ENCODE measurements at regions of chr7 and their contacts with region 1.

Region 1: GRCh38 chr7:87152107-87152844 is at the start of gene DMTF1:
- DNase-seq: peak; percentile 89 to 95 (median 91)
- H3K4me3 ChIP-seq: peak within 1 kb of the TSS; percentile 87 to 96 (median 93)
- H3K4me3 Mint-ChIP-seq: peak within 1 kb of the TSS; percentile 96 to 97
- H3K27ac ChIP-seq: peak within 1 kb of the TSS; percentile 98 to 99
- H3K27ac Mint-ChIP-seq: peak within 1 kb of the TSS; percentile 97 to 100 (median 99)
- H3K4me1 ChIP-seq: peaks cover 17 to 27% of the 10 kb centered on the region in 2 donors
- H3K4me1 Mint-ChIP-seq: peaks cover 33% of the 10 kb centered on the region
- H3K27me3 ChIP-seq: no peaks in the 10 kb centered on the region
- H3K27me3 Mint-ChIP-seq: peaks cover 0 to 4% (median 0%) of the 10 kb centered on the region in 3 donors
- CTCF ChIP-seq: no peak
- polyA plus RNA-seq, gene DMTF1: 4.9 to 108 (median 8.3) TPM

Region 2: GRCh38 chr7:87219545-87220025 is 67.3 kb after region 1 on chr7 and contains the start of gene TMEM243:
- intact Hi-C with region 1: loop called (anchors 10 kb)
- DNase-seq: peak; percentile 85 to 88 (median 87)
- H3K4me3 ChIP-seq: peak within 1 kb of the TSS; percentile 71 to 99 (median 98)
- H3K4me3 Mint-ChIP-seq: peak within 1 kb of the TSS; percentile 98 to 99
- H3K27ac ChIP-seq: peak within 1 kb of the TSS; percentile 90 to 98
- H3K27ac Mint-ChIP-seq: peak within 1 kb of the TSS; percentile 94 to 97 (median 96)
- H3K4me1 ChIP-seq: peaks cover 34 to 41% of the 10 kb centered on the region in 2 donors
- H3K4me1 Mint-ChIP-seq: peaks cover 33% of the 10 kb centered on the region
- H3K27me3 ChIP-seq: peaks cover 20 to 29% of the 10 kb centered on the region in 2 donors
- H3K27me3 Mint-ChIP-seq: peaks cover 0 to 12% (median 10%) of the 10 kb centered on the region in 3 donors
- CTCF ChIP-seq: peak; percentile 25
- polyA plus RNA-seq, gene TMEM243: 24.9 to 43.8 (median 30.8) TPM

Region 3: GRCh38 chr7:87876040-87876868 is 724.0 kb after region 1 on chr7 and contains the starts of genes DBF4 and SLC25A40:
- intact Hi-C with region 1: loop called in 1 of 2 experiments (anchors 10 kb)
- DNase-seq: peak; percentile 85 to 88 (median 86)
- H3K4me3 ChIP-seq: peak within 1 kb of the TSS; percentile 93 to 99 (median 98)
- H3K4me3 Mint-ChIP-seq: peak within 1 kb of the TSS; percentile 96 to 97
- H3K27ac ChIP-seq: peak within 1 kb of the TSS; percentile 91 to 94
- H3K27ac Mint-ChIP-seq: peak within 1 kb of the TSS; percentile 93 to 98 (median 96)
- H3K4me1 ChIP-seq: peaks cover 28 to 47% of the 10 kb centered on the region in 2 donors
- H3K4me1 Mint-ChIP-seq: peaks cover 46% of the 10 kb centered on the region
- H3K27me3 ChIP-seq: no peaks in the 10 kb centered on the region
- H3K27me3 Mint-ChIP-seq: peaks cover 0 to 2% (median 0%) of the 10 kb centered on the region in 3 donors
- CTCF ChIP-seq: no peak
- polyA plus RNA-seq, gene DBF4: 2.6 to 7.3 (median 6.7) TPM
- polyA plus RNA-seq, gene SLC25A40: 23.5 to 36.3 (median 26.2) TPM